ENCODE measurements at regions of chr6 and their contacts with region 1.

Region 1: GRCh38 chr6:31197559-31198305 is 27.2 kb upstream of the POU5F1 start:
- DNase-seq: peak; percentile 68 to 97 (median 82)

Region 2: GRCh38 chr6:31114970-31115849 is 82.5 kb before region 1 on chr6:
- intact Hi-C with region 1: no loop called
- DNase-seq: peak in 2 of 10 donors; percentile 36 to 40

Region 3: DNA sequence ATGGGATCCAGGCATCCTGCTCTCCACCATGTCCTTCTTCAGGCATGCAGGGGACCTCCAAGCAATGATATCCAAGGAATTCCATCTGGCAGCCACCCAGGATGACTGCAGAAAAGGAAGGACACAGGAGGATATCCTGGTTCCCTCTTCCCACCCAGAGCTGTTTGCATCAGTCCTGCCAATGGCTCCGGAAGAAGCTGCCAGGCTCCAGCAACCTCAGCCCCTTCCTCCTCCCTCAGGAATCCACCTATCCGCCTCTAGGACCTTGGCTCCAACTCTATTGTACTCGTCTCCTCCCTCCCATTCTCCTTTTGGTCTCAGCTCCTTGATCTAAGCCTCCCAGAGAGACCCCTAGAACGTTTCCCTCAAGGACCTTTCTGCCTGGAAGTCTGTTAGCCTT is 58.1 kb before region 1 on chr6:
- intact Hi-C with region 1: loop called (anchors 1 kb)
- DNase-seq: no peak

Region 4: GRCh38 chr6:31158140-31158862 is 39.4 kb before region 1 on chr6 and contains the start of gene TCF19:
- intact Hi-C with region 1: loop called (anchors 5 kb)
- DNase-seq: peak; percentile 92 to 99 (median 97)

Region 5: GRCh38 chr6:31180502-31180901 is 17.2 kb before region 1 on chr6:
- intact Hi-C with region 1: no loop called
- DNase-seq: peak in 8 of 10 donors; percentile 40 to 93 (median 62)

Region 6: DNA sequence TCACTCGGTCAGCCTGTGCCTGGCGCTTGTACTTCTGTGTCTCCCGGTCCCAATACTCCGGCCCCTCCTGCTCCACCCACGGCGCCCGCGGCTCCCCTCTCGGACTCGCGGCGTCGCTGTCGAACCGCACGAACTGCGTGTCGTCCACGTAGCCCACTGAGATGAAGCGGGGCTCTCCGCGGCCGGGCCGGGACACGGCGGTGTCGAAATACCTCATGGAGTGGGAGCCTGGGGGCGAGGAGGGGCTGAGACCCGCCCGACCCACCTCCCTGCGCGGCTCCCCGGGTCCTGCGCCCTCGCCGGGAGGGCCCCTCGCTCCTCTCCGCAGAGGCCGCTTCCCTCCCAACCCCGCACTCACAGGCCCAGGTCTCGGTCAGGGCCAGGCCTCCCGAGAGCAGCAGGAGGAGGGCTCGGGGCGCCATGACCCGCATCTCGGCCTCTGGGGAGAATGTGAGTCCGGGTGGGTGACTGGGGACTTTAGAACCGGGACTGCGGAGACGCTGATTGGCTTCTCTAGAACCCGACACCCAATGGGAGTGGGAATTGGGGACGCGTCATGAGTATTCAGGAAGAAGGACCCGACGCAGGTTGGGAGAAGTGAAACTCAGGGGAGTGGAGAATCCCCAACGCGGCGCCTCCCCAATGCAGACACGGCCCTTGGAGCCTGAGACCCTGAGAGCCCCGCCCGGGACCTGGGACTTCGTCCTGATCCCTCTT is 74.1 kb after region 1 on chr6 and contains the start of gene HLA-C:
- intact Hi-C with region 1: loop called (anchors 5 kb)
- DNase-seq: peak; percentile 68 to 99 (median 90)

Region 7: GRCh38 chr6:31366693-31367470 is 169.2 kb after region 1 on chr6:
- intact Hi-C with region 1: loop called (anchors 1 kb)
- DNase-seq: peak; percentile 71 to 98 (median 93)

Measured in posterior cingulate gyrus (tissue), 11 donors.